Activated T-helper 1 cell treated with anti-CD3 and anti-CD28 coated beads, Interleukin-12 subunit alpha, Interleukin-12 subunit beta, Interleukin-2, Interleukin-4 antibody, amounts not matched to agents 30 ng/mL and 10 ng/mL and 1 ng/mL, durations not matched to agents 14 hours and 24 hours and 36 hours (primary cell): ENCODE measurements at regions of chr12 and their contacts with region 1.

Region 1: GRCh38 chr12:6965026-6965661 is 5.3 kb downstream of the PHB2 start:
- DNase-seq: peak; percentile 78
- H3K4me3 Mint-ChIP-seq: no peak overlapping the region
- H3K27ac Mint-ChIP-seq: peak overlapping the region; percentile 90
- H3K4me1 Mint-ChIP-seq: peaks cover 59% of the 10 kb centered on the region
- H3K27me3 Mint-ChIP-seq: no peaks in the 10 kb centered on the region

Region 2: GRCh38 chr12:6662906-6663742 is 302.0 kb before region 1 on chr12 and contains the start of gene ING4:
- intact Hi-C with region 1: loop called (anchors 1 kb)
- DNase-seq: peak; percentile 95
- H3K4me3 Mint-ChIP-seq: peak within 1 kb of the TSS; percentile 89
- H3K27ac Mint-ChIP-seq: peak within 1 kb of the TSS; percentile 91
- H3K4me1 Mint-ChIP-seq: peaks cover 30% of the 10 kb centered on the region
- H3K27me3 Mint-ChIP-seq: no peaks in the 10 kb centered on the region
- total RNA-seq, gene ING4: 14.6 and 15.0 TPM in 2 replicates

Region 3: DNA sequence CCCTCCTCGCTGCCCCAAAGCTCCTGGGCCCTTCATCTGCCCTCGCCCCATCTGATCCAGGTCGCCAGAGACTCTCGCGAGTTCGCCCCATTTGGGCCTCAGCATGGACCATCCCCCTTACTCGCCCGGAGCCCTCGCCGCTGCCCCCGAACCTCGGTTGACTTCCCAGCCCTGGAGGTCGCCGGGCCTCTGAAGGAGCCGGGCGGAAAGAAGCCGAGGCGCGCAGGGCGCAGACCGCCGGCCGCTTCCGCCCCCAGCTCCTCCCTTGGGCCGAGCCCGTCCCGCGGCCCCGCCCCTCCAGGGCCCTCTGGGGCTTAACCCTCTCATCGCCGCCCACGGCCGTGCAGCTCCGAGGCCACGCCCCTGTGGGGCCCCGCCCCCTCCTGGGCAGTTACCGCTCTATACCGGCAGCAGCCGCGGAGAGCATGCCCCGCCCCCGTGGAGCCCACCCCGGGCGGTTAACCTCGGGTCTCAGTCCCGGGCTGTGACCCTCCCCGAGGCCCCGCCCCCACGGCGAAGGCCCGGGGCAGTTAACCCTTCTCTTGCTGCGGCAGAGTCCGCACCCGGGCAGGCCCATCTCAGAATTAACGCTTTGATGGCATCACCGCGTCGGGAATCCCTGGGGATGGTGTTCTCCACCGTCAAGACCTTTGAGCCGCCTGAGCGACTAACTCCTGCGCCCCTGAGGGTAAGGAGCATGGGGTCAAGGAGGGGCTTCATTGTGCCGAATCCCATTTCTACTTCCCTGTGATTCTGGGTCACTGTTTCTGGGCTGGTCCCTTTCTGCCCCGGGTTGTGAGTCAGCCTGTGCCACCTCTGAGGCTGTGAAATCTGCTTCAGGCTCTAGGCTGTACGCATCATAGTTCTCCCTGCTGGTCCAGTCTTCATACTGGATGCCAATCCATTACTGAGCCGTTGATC is 91.8 kb before region 1 on chr12 and contains the start of gene SPSB2:
- intact Hi-C with region 1: loop called (anchors 1 kb)
- DNase-seq: peak; percentile 99
- H3K4me3 Mint-ChIP-seq: peak within 1 kb of the TSS; percentile 96
- H3K27ac Mint-ChIP-seq: peak within 1 kb of the TSS; percentile 86
- H3K4me1 Mint-ChIP-seq: peaks cover 56% of the 10 kb centered on the region
- H3K27me3 Mint-ChIP-seq: no peaks in the 10 kb centered on the region
- total RNA-seq, gene SPSB2: 3.4 and 4.7 TPM in 2 replicates

Region 4: DNA sequence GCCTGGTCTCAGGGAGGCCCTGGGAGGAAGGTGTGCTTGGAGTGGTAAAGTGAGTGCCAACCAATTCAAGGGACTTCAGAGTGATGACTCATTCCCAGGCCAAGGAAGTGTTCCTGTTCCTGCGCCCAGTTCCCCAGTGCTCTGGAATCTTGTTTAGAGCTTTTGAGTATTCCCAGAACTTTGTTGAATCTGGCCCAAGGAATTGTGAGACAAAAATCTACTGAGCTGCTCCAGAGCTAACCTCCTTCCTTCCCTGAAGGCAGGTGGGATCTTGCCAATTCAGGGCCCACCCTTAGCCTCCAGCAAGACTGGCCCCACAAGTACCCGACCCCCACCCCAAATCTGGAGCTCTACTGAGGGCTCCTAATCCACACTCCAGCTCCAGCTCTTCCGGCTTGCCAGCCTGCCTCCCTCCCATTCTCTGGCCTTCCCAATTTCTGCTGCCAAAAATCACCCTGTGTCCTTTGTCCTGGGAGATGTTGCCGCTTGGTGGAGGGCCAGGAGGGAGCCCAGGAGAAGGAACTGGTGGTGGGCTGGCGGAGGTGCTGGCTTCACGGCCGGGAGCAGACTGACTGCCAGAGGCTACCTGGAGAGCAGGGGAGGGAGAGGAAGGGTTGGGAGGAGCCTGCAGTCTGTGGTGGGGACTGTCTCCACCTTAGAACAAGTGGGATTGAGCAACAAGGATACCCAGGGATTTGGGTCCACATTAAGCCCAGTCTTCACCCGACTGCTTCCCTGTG is 39.4 kb before region 1 on chr12:
- intact Hi-C with region 1: loop called (anchors 1 kb)
- DNase-seq: no peak
- H3K4me3 Mint-ChIP-seq: peak overlapping the region; percentile 91
- H3K27ac Mint-ChIP-seq: peak overlapping the region; percentile 94
- H3K4me1 Mint-ChIP-seq: peaks cover 44% of the 10 kb centered on the region
- H3K27me3 Mint-ChIP-seq: peaks cover 3% of the 10 kb centered on the region

Region 5: DNA sequence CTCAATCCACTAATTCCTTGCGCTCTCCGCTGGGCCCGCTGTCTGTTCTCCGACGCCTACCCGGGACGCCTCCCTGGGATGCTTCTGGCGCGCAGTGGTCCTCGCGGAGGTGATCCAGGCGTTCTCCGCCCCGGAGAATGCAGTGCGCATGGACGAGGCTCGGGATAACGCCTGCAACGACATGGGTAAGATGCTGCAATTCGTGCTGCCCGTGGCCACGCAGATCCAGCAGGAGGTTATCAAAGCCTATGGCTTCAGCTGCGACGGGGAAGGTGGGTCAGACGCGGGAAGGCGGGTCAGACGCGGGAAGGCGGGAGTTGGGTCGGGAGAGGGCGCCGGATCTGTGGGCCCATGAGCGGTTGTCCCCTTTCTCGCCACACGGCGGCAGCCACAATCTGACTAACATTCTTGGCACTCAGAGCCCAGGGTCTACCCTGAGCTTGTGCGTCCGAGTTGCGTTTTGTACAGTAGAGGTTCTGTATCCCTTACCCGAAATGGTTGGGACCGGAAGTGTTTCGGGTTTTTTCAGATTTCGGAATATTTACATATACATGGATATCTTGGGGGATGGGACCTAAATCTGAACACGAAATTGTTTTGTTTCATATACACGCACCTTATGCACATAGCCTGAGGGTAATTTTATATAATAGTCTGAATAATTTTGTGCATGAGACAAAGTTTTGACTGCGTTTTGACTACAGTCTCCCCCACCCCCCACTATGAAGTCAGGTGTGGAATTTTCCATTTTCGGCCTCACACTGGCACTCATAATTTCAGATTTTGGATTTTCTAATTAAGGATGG is 20.6 kb before region 1 on chr12:
- intact Hi-C with region 1: loop called (anchors 1 kb)
- DNase-seq: peak; percentile 84
- H3K4me3 Mint-ChIP-seq: peak overlapping the region; percentile 96
- H3K27ac Mint-ChIP-seq: peak overlapping the region; percentile 95
- H3K4me1 Mint-ChIP-seq: peaks cover 71% of the 10 kb centered on the region
- H3K27me3 Mint-ChIP-seq: no peaks in the 10 kb centered on the region

Region 6: DNA sequence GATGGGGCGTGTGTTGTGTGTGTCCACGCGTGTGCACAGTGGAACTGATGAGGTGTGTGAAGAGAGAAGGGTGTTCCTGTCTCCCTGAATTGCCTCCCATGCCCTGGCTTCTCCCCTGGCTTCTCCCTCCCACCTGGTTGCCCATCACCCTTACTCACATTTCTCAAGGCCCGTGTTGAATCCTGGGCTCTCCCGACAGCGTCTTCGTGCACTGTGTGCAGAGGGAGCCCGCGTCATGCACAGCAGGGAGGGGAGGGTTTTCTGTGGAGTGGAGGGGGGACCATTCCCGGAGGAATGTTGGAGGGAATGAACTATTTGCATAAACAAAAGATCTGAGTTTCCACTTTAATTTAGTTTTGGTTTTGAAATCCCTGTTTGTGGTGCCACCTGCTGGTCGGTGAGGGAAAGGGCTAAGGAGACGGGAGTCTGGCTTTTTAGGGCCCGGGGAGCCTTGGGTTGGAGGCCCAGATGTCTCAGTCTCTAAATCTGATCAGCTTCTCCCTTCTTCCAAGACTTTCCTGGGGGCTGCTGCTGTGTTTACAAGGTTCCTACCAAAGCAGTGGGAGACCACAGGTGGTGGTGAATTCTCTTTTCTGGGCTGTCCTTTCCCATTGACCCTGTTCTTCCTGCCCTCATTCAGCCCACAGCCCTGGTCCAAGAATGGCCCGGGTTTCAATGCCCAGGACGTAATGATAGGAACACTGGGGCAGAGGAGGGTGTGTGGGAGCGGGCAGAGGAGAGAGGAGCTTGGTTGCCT is 127.3 kb after region 1 on chr12 and contains the start of gene C1R:
- intact Hi-C with region 1: loop called (anchors 5 kb)
- DNase-seq: peak; percentile 51
- H3K4me3 Mint-ChIP-seq: peak within 1 kb of the TSS; percentile 80
- H3K27ac Mint-ChIP-seq: peak within 1 kb of the TSS; percentile 0
- H3K4me1 Mint-ChIP-seq: peaks cover 8% of the 10 kb centered on the region
- H3K27me3 Mint-ChIP-seq: peaks cover 6% of the 10 kb centered on the region
- total RNA-seq, gene C1R: 1.7 and 2.0 TPM in 2 replicates

Region 7: GRCh38 chr12:7188562-7189397 is 223.6 kb after region 1 on chr12:
- intact Hi-C with region 1: loop called (anchors 2 kb)
- DNase-seq: peak; percentile 49
- H3K4me3 Mint-ChIP-seq: peak overlapping the region; percentile 93
- H3K27ac Mint-ChIP-seq: peak overlapping the region; percentile 98
- H3K4me1 Mint-ChIP-seq: peaks cover 31% of the 10 kb centered on the region
- H3K27me3 Mint-ChIP-seq: peaks cover 4% of the 10 kb centered on the region